Caco-2 (cell line): ENCODE measurements at regions of chr9 and their contacts with region 1.

Region 1: GRCh38 chr9:80874276-80874675 is 815.1 kb downstream of the TLE1 start:
- DNase-seq: no peak
- H3K4me3 ChIP-seq: no peak overlapping the region
- H3K4me3 Mint-ChIP-seq: no peak overlapping the region
- H3K27ac Mint-ChIP-seq: no peak overlapping the region
- H3K4me1 ChIP-seq: no peaks in the 10 kb centered on the region
- H3K4me1 Mint-ChIP-seq: no peaks in the 10 kb centered on the region
- H3K27me3 ChIP-seq: no peaks in the 10 kb centered on the region
- H3K27me3 Mint-ChIP-seq: no peaks in the 10 kb centered on the region
- CTCF ChIP-seq: no peak

Region 2: GRCh38 chr9:80771555-80772347 is 102.5 kb before region 1 on chr9:
- CTCF ChIA-PET with region 1: no interaction called
- POLR2A ChIA-PET with region 1: no interaction called
- intact Hi-C with region 1: no loop called
- DNase-seq: no peak
- H3K4me3 ChIP-seq: no peak overlapping the region
- H3K4me3 Mint-ChIP-seq: no peak overlapping the region
- H3K27ac Mint-ChIP-seq: no peak overlapping the region
- H3K4me1 ChIP-seq: no peaks in the 10 kb centered on the region
- H3K4me1 Mint-ChIP-seq: no peaks in the 10 kb centered on the region
- H3K27me3 ChIP-seq: no peaks in the 10 kb centered on the region
- H3K27me3 Mint-ChIP-seq: no peaks in the 10 kb centered on the region
- CTCF ChIP-seq: no peak

Region 3: GRCh38 chr9:81445331-81445921 is 571.1 kb after region 1 on chr9:
- CTCF ChIA-PET with region 1: no interaction called
- POLR2A ChIA-PET with region 1: no interaction called
- intact Hi-C with region 1: loop called (anchors 10 kb)
- DNase-seq: no peak
- H3K4me3 ChIP-seq: no peak overlapping the region
- H3K4me3 Mint-ChIP-seq: no peak overlapping the region
- H3K27ac Mint-ChIP-seq: no peak overlapping the region
- H3K4me1 ChIP-seq: no peaks in the 10 kb centered on the region
- H3K4me1 Mint-ChIP-seq: no peaks in the 10 kb centered on the region
- H3K27me3 ChIP-seq: no peaks in the 10 kb centered on the region
- H3K27me3 Mint-ChIP-seq: no peaks in the 10 kb centered on the region
- CTCF ChIP-seq: no peak

Region 4: GRCh38 chr9:81787747-81788632 is 913.7 kb after region 1 on chr9:
- CTCF ChIA-PET with region 1: no interaction called
- POLR2A ChIA-PET with region 1: no interaction called
- intact Hi-C with region 1: loop called (anchors 10 kb)
- DNase-seq: peak; percentile 60 to 77
- H3K4me3 ChIP-seq: no peak overlapping the region
- H3K4me3 Mint-ChIP-seq: peak overlapping the region; percentile 43
- H3K27ac Mint-ChIP-seq: peak overlapping the region; percentile 69
- H3K4me1 ChIP-seq: peaks cover 24% of the 10 kb centered on the region
- H3K4me1 Mint-ChIP-seq: peaks cover 5% of the 10 kb centered on the region
- H3K27me3 ChIP-seq: no peaks in the 10 kb centered on the region
- H3K27me3 Mint-ChIP-seq: no peaks in the 10 kb centered on the region
- CTCF ChIP-seq: no peak

Region 5: DNA sequence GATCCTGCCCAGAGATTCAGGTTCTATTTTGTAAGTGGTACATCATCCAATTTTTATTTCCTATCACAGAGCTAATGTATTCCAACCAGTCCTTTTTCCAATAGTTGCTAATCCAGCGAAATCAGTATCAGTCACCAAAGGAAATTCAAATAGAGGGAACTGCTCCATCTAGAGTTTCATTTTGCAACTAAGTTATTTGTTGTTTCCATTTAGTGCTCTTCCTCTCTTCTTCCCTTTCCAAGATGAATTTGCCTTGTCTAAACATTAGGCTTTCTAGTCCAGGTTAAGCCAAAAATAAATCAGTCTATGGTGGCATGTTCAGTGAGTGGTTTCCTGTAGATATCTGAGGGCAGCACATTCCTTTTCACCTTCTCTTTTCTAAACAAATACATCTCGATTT is 974.2 kb after region 1 on chr9:
- CTCF ChIA-PET with region 1: no interaction called
- POLR2A ChIA-PET with region 1: no interaction called
- intact Hi-C with region 1: loop called (anchors 5 kb)
- DNase-seq: no peak
- H3K4me3 ChIP-seq: no peak overlapping the region
- H3K4me3 Mint-ChIP-seq: no peak overlapping the region
- H3K27ac Mint-ChIP-seq: no peak overlapping the region
- H3K4me1 ChIP-seq: no peaks in the 10 kb centered on the region
- H3K4me1 Mint-ChIP-seq: no peaks in the 10 kb centered on the region
- H3K27me3 ChIP-seq: no peaks in the 10 kb centered on the region
- H3K27me3 Mint-ChIP-seq: no peaks in the 10 kb centered on the region
- CTCF ChIP-seq: no peak